Aorta (tissue), 5 donors: ENCODE measurements at regions of chr10 and their contacts with region 1.

Region 1: DNA sequence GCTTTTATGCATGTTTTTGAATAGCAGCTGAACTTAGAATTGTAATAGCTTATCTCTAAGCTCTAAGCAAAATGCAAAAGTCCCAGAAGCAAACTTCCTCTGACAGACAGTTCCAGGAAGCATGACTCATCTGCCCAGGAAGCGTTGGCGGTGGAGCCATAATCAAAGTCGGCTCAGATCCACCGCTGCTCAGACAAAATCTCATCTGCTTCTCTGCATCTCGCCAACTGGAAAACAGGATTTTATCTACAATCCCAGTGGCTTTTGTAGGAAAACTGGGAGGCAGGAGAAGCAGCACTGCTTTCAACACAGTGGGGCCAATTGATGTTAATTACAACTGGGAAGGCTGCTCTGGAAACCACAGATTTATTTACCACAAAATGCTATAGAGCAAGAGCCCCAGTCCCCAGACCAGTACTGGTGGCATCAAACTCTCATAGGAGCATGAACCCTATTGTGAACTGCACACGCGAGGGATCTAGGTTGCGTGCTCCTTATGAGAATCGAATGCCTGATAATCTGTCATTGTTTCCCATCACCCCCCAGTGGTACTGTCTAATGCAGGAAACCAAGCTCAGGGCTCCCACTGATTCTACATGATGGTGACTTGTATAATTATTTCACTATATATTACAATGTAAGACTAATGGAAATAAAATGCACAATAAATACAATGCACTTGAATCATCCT is 99.9 kb downstream of the CUBN start:
- DNase-seq: peak; percentile 77 to 82
- ATAC-seq: peak; percentile 87
- H3K4me3 ChIP-seq: no peak overlapping the region
- H3K27ac ChIP-seq: no peak overlapping the region
- H3K4me1 ChIP-seq: no peaks in the 10 kb centered on the region
- H3K27me3 ChIP-seq: no peaks in the 10 kb centered on the region

Region 2: DNA sequence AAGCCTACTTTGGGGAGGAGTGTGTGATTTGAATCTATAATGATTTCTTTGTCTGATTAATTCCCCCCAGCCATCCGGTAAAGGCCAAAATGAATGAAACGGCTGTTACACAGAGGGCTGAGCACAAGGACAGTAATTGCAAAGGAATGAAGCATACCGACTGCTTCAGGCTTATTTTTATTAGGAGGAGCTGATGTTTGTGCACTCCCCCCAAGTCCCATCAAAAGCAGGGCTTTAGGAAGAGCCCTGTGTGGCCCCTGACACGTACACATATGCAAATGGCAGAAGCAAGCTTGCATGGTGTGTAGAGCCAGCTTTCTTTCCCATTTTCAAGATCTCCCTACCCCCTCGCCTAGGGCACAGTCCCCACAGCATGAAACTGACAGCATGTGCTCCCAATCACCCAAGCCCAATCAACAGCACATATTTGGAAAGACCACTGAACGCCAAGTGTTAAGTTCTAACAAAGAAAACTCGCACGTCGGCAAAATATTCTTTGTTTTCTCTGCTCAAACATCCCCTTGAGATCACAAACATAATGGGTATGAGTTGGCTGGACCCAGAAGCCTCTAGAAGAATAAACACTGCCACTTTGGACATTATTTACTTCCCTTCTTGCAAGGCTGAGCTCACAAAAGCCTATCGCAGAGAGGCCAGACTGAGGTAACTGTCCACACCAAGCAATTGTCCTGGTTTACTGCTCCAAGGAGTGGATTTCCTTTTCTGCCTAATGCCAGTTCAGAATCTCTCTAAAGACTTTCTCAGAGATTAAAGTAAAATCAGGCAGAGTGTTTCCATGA is 43.1 kb before region 1 on chr10:
- intact Hi-C with region 1: no loop called
- DNase-seq: no peak
- ATAC-seq: peak; percentile 46
- H3K4me3 ChIP-seq: no peak overlapping the region
- H3K27ac ChIP-seq: peak overlapping the region; percentile 8 to 43
- H3K4me1 ChIP-seq: peaks cover 4% of the 10 kb centered on the region in 2 donors
- H3K27me3 ChIP-seq: no peaks in the 10 kb centered on the region

Region 3: GRCh38 chr10:17062955-17063484 is 33.3 kb after region 1 on chr10:
- intact Hi-C with region 1: loop called in 1 of 2 experiments (anchors 5 kb)
- DNase-seq: peak; percentile 81 to 86
- ATAC-seq: peak; percentile 88
- H3K4me3 ChIP-seq: no peak overlapping the region
- H3K27ac ChIP-seq: peak overlapping the region; percentile 23 to 100
- H3K4me1 ChIP-seq: peaks cover 0 to 2% of the 10 kb centered on the region in 2 donors
- H3K27me3 ChIP-seq: no peaks in the 10 kb centered on the region

Region 4: GRCh38 chr10:17101257-17101909 is 71.7 kb after region 1 on chr10:
- intact Hi-C with region 1: no loop called
- DNase-seq: no peak
- ATAC-seq: no peak
- H3K4me3 ChIP-seq: no peak overlapping the region
- H3K27ac ChIP-seq: no peak overlapping the region
- H3K4me1 ChIP-seq: no peaks in the 10 kb centered on the region
- H3K27me3 ChIP-seq: no peaks in the 10 kb centered on the region